ENCODE measurements at regions of chr15 and their contacts with region 1.

Region 1: DNA sequence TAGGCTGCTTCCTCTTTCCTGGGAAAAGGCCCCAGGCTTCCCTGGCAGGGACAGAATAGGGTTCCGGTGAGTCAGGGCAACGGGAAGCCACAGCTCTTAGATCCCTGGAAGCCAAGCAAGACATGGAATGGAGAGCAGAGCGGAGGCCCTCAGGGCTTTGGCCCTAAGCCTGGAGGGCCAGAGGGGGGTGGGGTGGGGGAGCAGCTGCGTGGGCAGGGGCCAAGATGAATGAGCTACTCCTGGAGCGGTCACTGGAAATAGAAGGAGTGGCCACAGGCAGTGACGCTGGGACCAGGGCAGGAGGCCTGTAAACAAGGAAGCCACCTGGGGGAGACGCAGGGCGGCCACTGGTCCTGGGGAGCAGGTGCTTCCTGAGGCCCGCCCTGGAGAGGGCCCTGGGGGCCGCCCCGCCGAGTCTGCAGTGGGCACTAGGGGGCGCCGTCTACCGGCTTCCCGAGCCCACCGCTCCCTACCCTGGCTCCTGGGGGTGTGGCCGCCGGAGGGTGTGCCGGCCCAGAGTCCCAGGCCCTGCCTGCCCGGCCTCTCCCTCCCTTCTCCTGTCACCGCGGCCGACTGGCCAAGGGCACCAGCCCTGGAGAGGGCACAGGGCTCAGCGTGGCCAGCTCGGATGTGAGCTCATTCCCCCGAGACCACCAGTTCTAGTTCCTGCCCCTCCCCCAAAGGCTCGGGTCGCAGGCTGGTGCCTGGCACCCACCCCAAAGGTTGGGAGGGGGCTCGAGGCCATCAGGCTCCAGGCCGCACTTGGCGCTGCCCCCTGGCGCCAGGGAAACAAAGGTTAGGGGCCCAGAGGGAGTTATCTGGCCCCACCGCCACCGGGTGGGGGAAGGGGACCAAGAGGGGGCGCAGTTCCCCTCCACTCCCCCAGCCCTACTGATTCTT is 12.1 kb downstream of the VPS18 start:
- DNase-seq: peak; percentile 55 to 75 (median 69)
- ATAC-seq: peak; percentile 76
- H3K4me3 ChIP-seq: peak overlapping the region; percentile 66
- H3K4me3 Mint-ChIP-seq: peak overlapping the region; percentile 60 to 88 (median 84)
- H3K27ac ChIP-seq: peak overlapping the region; percentile 55
- H3K27ac Mint-ChIP-seq: peak overlapping the region in 8 of 9 donors; percentile 19 to 93 (median 88)
- H3K4me1 ChIP-seq: peaks cover 6 to 16% of the 10 kb centered on the region in 2 donors
- H3K4me1 Mint-ChIP-seq: peaks cover 29 to 44% (median 34%) of the 10 kb centered on the region in 7 donors
- H3K27me3 ChIP-seq: no peaks in the 10 kb centered on the region
- H3K27me3 Mint-ChIP-seq: no peaks in the 10 kb centered on the region

Region 2: GRCh38 chr15:40569139-40569953 is 337.0 kb before region 1 on chr15 and contains the start of gene RPUSD2:
- CTCF ChIA-PET with region 1: no interaction called
- POLR2A ChIA-PET with region 1: no interaction called
- intact Hi-C with region 1: no loop called
- DNase-seq: peak; percentile 80 to 94 (median 92)
- ATAC-seq: peak; percentile 78
- H3K4me3 ChIP-seq: peak within 1 kb of the TSS; percentile 95
- H3K4me3 Mint-ChIP-seq: peak within 1 kb of the TSS; percentile 88 to 99 (median 96)
- H3K27ac ChIP-seq: peak within 1 kb of the TSS; percentile 98
- H3K27ac Mint-ChIP-seq: peak within 1 kb of the TSS; percentile 93 to 100 (median 99)
- H3K4me1 ChIP-seq: peaks cover 18 to 20% of the 10 kb centered on the region in 2 donors
- H3K4me1 Mint-ChIP-seq: peaks cover 31 to 54% (median 40%) of the 10 kb centered on the region in 7 donors
- H3K27me3 ChIP-seq: no peaks in the 10 kb centered on the region
- H3K27me3 Mint-ChIP-seq: peaks cover 0 to 8% (median 0%) of the 10 kb centered on the region in 5 donors
- total RNA-seq, gene RPUSD2: 10.6 to 19.0 (median 15.5) TPM

Region 3: DNA sequence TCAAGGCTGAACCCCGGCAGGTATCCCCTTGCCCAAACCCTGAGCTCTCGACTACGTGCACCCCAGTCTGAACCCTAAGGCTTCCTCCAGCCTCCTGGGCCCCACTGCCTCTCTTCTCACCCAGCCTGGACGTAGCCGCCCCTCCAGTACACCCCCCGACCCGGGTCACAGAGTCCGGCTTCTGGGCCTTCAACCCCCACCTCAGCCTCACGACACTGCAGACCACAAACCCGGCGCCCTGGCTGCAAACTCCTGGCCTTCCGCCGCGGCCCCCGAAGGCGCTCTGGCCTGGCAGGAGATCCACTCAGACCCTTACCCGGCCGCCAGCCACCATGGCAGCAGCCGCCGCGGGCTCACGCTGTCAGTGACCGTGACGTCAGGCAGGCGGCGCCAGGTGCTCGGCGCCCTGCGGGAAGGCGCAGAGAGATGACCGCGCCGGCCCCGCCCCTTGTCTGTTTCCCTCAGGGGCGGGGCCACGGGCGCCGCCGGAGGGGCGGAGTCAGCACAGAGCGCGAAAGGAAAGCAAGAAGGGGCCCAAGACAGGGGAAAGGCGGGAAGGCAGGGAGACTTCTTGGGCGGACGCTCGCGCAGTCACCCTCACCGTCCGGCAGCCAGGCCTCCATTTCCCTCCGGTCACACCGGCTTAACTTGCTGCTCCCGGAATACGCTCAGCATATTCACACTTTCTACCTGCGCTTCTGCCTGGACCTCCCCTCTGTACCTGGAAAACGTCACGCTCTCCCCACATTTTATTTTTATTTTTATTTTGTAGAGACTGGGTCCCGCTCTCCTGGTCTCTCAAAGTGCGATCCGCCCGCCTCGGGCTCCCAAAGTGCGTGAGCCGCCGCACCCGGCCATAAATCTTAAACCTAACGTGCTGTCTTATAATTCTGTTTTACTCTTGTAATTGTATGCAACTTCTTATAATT is 151.2 kb before region 1 on chr15 and contains the start of gene RMDN3:
- CTCF ChIA-PET with region 1: no interaction called
- POLR2A ChIA-PET with region 1: no interaction called
- intact Hi-C with region 1: no loop called
- DNase-seq: peak; percentile 89 to 97 (median 92)
- ATAC-seq: peak; percentile 99
- H3K4me3 ChIP-seq: peak within 1 kb of the TSS; percentile 94
- H3K4me3 Mint-ChIP-seq: peak within 1 kb of the TSS; percentile 90 to 98 (median 94)
- H3K27ac ChIP-seq: peak within 1 kb of the TSS; percentile 95
- H3K27ac Mint-ChIP-seq: peak within 1 kb of the TSS; percentile 89 to 99 (median 95)
- H3K4me1 ChIP-seq: peaks cover 7 to 10% of the 10 kb centered on the region in 2 donors
- H3K4me1 Mint-ChIP-seq: peaks cover 16 to 37% (median 27%) of the 10 kb centered on the region in 7 donors
- H3K27me3 ChIP-seq: no peaks in the 10 kb centered on the region
- H3K27me3 Mint-ChIP-seq: no peaks in the 10 kb centered on the region
- total RNA-seq, gene RMDN3: 19.5 to 44.0 (median 31.9) TPM

Region 4: DNA sequence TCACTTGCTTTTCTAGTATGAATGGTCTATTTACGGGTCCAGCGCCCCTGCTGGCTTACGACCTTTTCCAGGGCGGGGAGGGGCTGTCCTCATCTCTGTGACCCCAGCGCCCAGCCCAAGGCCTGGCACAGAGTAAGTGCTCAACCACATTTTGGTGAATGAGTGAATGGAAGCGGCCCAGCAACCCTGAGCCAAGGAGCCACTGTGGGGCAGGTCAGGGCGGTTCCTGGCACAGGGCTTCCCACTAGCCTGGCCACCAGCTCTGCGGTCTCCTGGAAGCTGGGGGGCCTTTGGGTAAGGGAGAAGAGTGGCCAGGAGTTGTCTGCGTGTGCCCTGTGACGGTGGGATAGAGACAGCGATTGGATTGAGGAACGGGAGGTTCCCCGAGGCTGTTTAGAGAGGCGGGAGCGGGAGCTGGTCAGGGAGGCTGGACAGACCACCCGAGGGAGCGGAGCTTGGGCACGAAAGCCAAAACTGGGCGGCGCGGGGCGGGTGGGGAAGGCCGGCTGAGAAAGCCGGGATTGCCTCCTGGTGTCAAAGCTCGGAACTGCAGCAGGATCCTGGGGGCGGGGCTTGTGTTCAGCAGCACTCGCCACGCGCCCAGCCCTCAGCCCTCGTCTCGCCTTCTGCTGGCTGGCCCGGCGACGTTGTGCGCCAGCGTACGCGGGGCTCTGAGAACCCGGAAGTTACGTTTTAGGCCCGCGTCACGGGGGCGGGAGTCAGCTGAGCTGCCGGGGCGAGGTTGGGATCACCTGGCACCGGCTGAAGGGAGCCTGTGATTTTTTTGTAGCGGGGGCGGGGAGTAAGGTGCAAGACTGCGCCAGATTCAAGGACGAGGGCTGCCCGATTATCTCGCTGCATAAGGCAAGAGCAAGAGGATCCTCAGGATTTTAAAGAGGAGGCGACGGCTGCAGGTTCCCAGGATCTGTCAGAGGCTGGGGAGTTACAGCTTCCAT is 12.3 kb before region 1 on chr15 and contains the start of gene VPS18:
- CTCF ChIA-PET with region 1: interaction called, 39 read pairs
- POLR2A ChIA-PET with region 1: interaction called, 7 read pairs
- intact Hi-C with region 1: loop called (anchors 1 kb)
- DNase-seq: peak; percentile 96 to 99 (median 98)
- ATAC-seq: peak; percentile 99
- H3K4me3 ChIP-seq: peak within 1 kb of the TSS; percentile 94
- H3K4me3 Mint-ChIP-seq: peak within 1 kb of the TSS; percentile 96 to 99 (median 98)
- H3K27ac ChIP-seq: peak within 1 kb of the TSS; percentile 83
- H3K27ac Mint-ChIP-seq: peak within 1 kb of the TSS; percentile 87 to 98 (median 96)
- H3K4me1 ChIP-seq: peaks cover 17 to 18% of the 10 kb centered on the region in 2 donors
- H3K4me1 Mint-ChIP-seq: peaks cover 30 to 47% (median 37%) of the 10 kb centered on the region in 7 donors
- H3K27me3 ChIP-seq: no peaks in the 10 kb centered on the region
- H3K27me3 Mint-ChIP-seq: peaks cover 0 to 7% (median 0%) of the 10 kb centered on the region in 5 donors
- total RNA-seq, gene VPS18: 19.9 to 22.3 (median 20.5) TPM

Region 5: DNA sequence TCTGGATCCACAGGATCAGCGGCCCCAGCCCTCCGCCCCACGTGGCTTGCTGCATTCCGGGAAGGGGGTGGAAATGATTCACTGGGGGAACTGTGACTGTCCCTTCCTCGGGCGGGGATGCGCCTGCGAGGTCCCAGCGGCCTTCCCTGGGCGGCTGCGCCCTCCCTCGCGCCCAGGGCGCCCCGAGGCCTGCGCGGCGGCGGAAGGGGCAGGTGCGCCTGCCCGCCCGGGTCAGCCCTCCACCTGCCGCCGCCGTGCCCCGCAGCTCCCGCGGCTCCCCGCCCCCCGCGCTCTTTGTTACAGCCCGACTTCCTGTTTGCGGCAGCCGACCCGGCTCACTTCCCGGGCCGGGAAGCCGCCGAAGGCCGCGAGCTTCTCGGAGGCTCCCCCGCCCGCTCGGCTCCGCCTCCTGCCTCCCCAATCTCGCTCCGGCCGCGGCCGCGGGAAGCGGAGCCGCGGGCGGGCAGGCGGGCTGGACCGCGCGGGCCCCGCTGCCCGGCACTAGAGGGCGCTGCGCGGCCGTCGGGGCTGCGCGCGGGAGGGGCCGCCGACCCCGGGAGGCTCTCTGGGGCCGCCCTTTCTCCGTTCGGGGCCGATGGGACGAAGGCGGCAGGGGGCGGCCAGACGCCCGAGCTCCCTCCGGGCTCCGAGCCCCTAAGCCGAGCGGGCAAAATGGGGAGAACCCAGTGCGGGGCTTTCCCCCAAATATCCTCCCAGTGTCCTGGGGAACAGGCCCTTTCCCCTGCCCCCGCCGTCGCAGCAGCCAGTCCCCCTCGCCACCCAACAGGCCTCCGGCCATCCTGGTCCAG is 35.4 kb after region 1 on chr15:
- CTCF ChIA-PET with region 1: interaction called, 44 read pairs
- POLR2A ChIA-PET with region 1: interaction called, 26 read pairs
- intact Hi-C with region 1: loop called (anchors 1 kb)
- DNase-seq: peak; percentile 59 to 84 (median 70)
- ATAC-seq: peak; percentile 86
- H3K4me3 ChIP-seq: peak overlapping the region; percentile 82
- H3K4me3 Mint-ChIP-seq: peak overlapping the region; percentile 79 to 95 (median 88)
- H3K27ac ChIP-seq: peak overlapping the region; percentile 75
- H3K27ac Mint-ChIP-seq: peak overlapping the region; percentile 58 to 92 (median 89)
- H3K4me1 ChIP-seq: peaks cover 12 to 27% of the 10 kb centered on the region in 2 donors
- H3K4me1 Mint-ChIP-seq: peaks cover 17 to 47% (median 44%) of the 10 kb centered on the region in 7 donors
- H3K27me3 ChIP-seq: no peaks in the 10 kb centered on the region
- H3K27me3 Mint-ChIP-seq: no peaks in the 10 kb centered on the region

Region 6: GRCh38 chr15:41022487-41023090 is 116.2 kb after region 1 on chr15:
- CTCF ChIA-PET with region 1: interaction called, 26 read pairs
- POLR2A ChIA-PET with region 1: no interaction called
- intact Hi-C with region 1: loop called (anchors 1 kb)
- DNase-seq: peak; percentile 9 to 50 (median 34)
- ATAC-seq: peak; percentile 68
- H3K4me3 ChIP-seq: no peak overlapping the region
- H3K4me3 Mint-ChIP-seq: no peak overlapping the region
- H3K27ac ChIP-seq: no peak overlapping the region
- H3K27ac Mint-ChIP-seq: peak overlapping the region in 1 of 9 donors; percentile 41
- H3K4me1 ChIP-seq: no peaks in the 10 kb centered on the region
- H3K4me1 Mint-ChIP-seq: peaks cover 3 to 14% (median 7%) of the 10 kb centered on the region in 7 donors
- H3K27me3 ChIP-seq: no peaks in the 10 kb centered on the region
- H3K27me3 Mint-ChIP-seq: no peaks in the 10 kb centered on the region

Region 7: GRCh38 chr15:41331833-41332787 is 425.8 kb after region 1 on chr15 and contains the start of gene OIP5:
- CTCF ChIA-PET with region 1: no interaction called
- POLR2A ChIA-PET with region 1: no interaction called
- intact Hi-C with region 1: loop called (anchors 1 to 5 kb)
- DNase-seq: peak; percentile 83 to 99 (median 97)
- ATAC-seq: peak; percentile 98
- H3K4me3 ChIP-seq: peak within 1 kb of the TSS; percentile 95
- H3K4me3 Mint-ChIP-seq: peak within 1 kb of the TSS; percentile 87 to 100 (median 97)
- H3K27ac ChIP-seq: peak within 1 kb of the TSS; percentile 52
- H3K27ac Mint-ChIP-seq: peak within 1 kb of the TSS; percentile 77 to 97 (median 91)
- H3K4me1 ChIP-seq: peaks cover 9 to 13% of the 10 kb centered on the region in 2 donors
- H3K4me1 Mint-ChIP-seq: peaks cover 12 to 32% (median 29%) of the 10 kb centered on the region in 7 donors
- H3K27me3 ChIP-seq: no peaks in the 10 kb centered on the region
- H3K27me3 Mint-ChIP-seq: no peaks in the 10 kb centered on the region
- total RNA-seq, gene OIP5: 0.32 to 15.2 (median 0.54) TPM in 4 of 5 experiments, not detected in the other

Measured in naive thymus-derived CD4-positive, alpha-beta T cell (primary cell).